Activated naive CD4-positive, alpha-beta T cell treated with anti-CD3 and anti-CD28 coated beads for 36 hours (primary cell): ENCODE measurements at regions of chr17 and their contacts with region 1.

Region 1: GRCh38 chr17:42459256-42459800 is 650 bp downstream of the ATP6V0A1 start:
- DNase-seq: peak; percentile 68
- H3K4me3 Mint-ChIP-seq: peak overlapping the region; percentile 89
- H3K27ac Mint-ChIP-seq: peak overlapping the region; percentile 84
- H3K4me1 Mint-ChIP-seq: peaks cover 39% of the 10 kb centered on the region
- H3K27me3 Mint-ChIP-seq: no peaks in the 10 kb centered on the region

Region 2: DNA sequence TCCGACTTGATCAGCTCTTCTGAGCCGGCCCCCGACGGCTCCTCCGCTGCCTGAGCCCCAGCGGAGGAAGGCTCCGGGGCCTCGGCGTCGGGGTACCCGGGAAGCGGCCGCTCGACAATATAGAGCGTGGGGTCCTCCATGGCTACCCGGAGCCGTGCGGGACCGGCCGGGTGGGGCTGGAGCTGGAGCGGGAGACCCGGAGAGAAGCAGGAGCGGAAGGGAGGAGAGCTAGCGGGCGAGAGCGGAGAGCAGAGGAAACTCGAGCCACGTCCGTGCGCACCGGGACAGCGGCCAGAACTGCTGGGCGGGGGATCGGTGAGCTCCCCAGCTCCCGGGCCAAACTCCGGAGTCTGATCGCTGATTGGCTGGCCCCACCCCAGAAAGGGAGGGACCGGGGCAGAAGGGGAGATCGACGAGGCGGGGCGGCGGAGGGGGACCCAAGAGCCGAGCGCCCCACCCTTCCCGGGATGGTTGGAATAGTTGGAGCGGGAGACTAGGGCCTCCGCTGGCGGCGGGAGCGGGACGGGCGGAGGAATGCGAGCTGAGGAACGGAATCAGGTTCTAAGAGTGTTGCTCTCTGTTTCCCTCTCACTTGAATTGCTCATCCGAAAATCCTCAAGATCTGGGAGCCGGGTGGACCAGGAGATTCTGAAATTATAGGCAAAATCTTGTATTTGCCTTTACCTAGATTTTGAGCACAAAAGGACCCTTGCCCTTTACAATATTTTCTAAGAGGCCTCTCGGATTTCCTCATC is 36.2 kb before region 1 on chr17 and contains the start of gene CAVIN1:
- CTCF ChIA-PET with region 1: interaction called, 3 read pairs
- intact Hi-C with region 1: loop called (anchors 5 kb)
- DNase-seq: peak; percentile 22
- H3K4me3 Mint-ChIP-seq: peak within 1 kb of the TSS; percentile 71
- H3K27ac Mint-ChIP-seq: no peak within 1 kb of the TSS
- H3K4me1 Mint-ChIP-seq: peaks cover 9% of the 10 kb centered on the region
- H3K27me3 Mint-ChIP-seq: peaks cover 20% of the 10 kb centered on the region
- total RNA-seq, gene CAVIN1: 0.64 to 0.67 TPM

Region 3: GRCh38 chr17:42484304-42484703 is 25.0 kb after region 1 on chr17:
- CTCF ChIA-PET with region 1: interaction called, 4 read pairs
- intact Hi-C with region 1: loop called (anchors 1 kb)
- DNase-seq: peak; percentile 85
- H3K4me3 Mint-ChIP-seq: no peak overlapping the region
- H3K27ac Mint-ChIP-seq: peak overlapping the region; percentile 26
- H3K4me1 Mint-ChIP-seq: peaks cover 29% of the 10 kb centered on the region
- H3K27me3 Mint-ChIP-seq: no peaks in the 10 kb centered on the region